ENCODE measurements at regions of chr4 and their contacts with region 1.

Region 1: GRCh38 chr4:105146276-105147015 is at the start of gene TET2:
- DNase-seq: peak; percentile 79 to 83
- ATAC-seq: peak; percentile 88 to 94 (median 90)
- H3K4me3 ChIP-seq: peak within 1 kb of the TSS; percentile 63 to 95 (median 85)
- H3K27ac ChIP-seq: peak within 1 kb of the TSS; percentile 69 to 97 (median 87)
- H3K4me1 ChIP-seq: peaks cover 0 to 47% (median 33%) of the 10 kb centered on the region in 9 donors
- H3K27me3 ChIP-seq: no peaks in the 10 kb centered on the region
- CTCF ChIP-seq: peak in 1 of 9 donors; percentile 2
- total RNA-seq, gene TET2: 12.1 to 20.6 (median 17.0) TPM

Region 2: DNA sequence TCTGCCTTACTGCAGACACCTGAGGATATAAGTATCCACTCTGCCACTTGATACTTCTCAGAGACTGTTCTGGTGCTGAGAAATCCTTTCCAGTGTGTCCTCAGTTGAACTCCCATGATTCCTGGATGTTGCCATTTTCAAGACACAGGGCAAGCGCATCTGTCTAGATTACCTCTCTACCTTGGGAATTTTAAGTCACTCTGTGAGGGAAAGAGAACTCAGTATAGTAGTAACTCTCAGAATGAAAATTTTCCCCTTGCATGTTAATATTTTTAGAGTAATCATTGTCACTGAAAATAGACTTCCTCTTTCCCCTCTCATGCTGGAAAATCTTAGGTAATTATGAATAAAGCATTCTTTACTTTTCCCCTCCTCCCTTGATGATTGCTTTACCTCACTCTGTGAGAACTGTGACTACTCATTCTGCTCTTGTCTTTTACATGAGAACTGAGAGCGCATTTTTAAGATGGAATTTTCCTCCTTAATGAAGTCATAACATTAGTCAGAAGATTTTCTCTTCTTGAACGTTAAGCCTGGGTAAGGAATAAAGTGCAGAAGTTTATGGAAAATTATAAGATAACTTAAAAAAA is 45.3 kb after region 1 on chr4:
- intact Hi-C with region 1: loop called in 6 of 10 experiments (anchors 5 kb)
- DNase-seq: no peak
- ATAC-seq: peak in 7 of 8 donors; percentile 34 to 75 (median 55)
- H3K4me3 ChIP-seq: peak overlapping the region in 1 of 10 donors; percentile 5
- H3K27ac ChIP-seq: peak overlapping the region in 8 of 10 donors; percentile 16 to 65 (median 44)
- H3K4me1 ChIP-seq: peaks cover 0 to 67% (median 57%) of the 10 kb centered on the region in 9 donors
- H3K27me3 ChIP-seq: no peaks in the 10 kb centered on the region
- CTCF ChIP-seq: no peak

Region 3: DNA sequence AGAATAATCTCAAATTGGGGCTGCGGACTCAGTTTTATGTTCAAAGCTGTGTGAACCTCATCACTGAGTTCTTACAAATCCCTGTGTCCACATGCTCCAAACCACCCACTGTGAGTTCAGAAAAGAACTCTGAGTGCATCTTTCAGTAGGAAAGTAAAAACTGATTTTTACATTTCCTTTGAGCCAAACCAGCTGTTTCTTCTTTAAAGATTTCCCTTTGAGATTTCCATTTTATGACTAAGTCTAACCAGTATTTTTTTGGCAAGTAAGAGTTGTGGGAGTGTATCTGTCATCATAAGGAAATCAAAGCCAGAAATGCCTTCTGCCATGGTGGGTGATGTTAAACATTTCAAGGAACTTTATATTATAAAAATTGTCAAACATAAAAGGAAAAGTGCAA is 100.3 kb after region 1 on chr4:
- intact Hi-C with region 1: loop called in 6 of 10 experiments (anchors 5 to 10 kb)
- DNase-seq: no peak
- ATAC-seq: peak in 7 of 8 donors; percentile 33 to 72 (median 46)
- H3K4me3 ChIP-seq: no peak overlapping the region
- H3K27ac ChIP-seq: no peak overlapping the region
- H3K4me1 ChIP-seq: peaks cover 0 to 16% (median 10%) of the 10 kb centered on the region in 9 donors
- H3K27me3 ChIP-seq: no peaks in the 10 kb centered on the region
- CTCF ChIP-seq: no peak

Region 4: DNA sequence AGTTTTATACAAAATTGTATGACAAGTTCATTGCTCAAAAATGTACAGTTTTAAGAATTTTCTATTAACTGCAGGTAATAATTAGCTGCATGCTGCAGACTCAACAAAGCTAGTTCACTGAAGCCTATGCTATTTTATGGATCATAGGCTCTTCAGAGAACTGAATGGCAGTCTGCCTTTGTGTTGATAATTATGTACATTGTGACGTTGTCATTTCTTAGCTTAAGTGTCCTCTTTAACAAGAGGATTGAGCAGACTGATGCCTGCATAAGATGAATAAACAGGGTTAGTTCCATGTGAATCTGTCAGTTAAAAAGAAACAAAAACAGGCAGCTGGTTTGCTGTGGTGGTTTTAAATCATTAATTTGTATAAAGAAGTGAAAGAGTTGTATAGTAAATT is 131.3 kb after region 1 on chr4:
- intact Hi-C with region 1: loop called in 1 of 10 experiments (anchors 10 kb)
- DNase-seq: no peak
- ATAC-seq: no peak
- H3K4me3 ChIP-seq: no peak overlapping the region
- H3K27ac ChIP-seq: no peak overlapping the region
- H3K4me1 ChIP-seq: peaks cover 0 to 10% (median 0%) of the 10 kb centered on the region in 9 donors
- H3K27me3 ChIP-seq: no peaks in the 10 kb centered on the region
- CTCF ChIP-seq: no peak

Region 5: DNA sequence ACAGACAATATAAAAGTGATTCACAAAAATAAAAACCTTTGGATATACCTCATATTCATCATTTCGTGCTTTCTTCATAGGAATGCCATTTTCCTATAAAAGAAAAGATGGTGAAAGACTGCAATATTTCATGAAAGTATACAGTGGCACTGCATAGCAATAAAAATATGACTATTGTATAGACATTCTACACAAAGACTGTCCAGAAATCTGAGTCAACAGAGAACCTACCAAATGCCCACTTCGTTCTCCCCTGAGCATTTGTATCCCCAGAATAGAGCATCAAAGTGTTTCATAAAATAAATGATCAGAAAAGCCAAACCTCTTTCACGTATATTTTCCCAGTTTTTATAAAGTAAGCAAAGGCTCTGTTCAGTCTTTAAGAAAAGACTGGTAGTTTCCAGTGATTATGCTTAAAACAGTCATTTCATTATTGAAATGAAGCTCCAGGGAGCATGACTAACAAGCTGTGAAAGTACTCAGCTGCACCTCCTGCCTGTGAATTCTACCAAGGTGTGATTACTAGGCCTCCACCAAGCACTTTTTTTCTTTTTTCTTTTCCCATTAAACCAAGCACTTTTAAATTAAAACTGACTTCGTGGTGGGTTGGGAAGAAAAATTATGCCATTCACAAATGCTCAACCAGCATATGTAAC is 307.2 kb after region 1 on chr4:
- intact Hi-C with region 1: loop called in 1 of 10 experiments (anchors 5 kb)
- DNase-seq: no peak
- ATAC-seq: no peak
- H3K4me3 ChIP-seq: no peak overlapping the region
- H3K27ac ChIP-seq: no peak overlapping the region
- H3K4me1 ChIP-seq: peaks cover 0 to 34% (median 14%) of the 10 kb centered on the region in 9 donors
- H3K27me3 ChIP-seq: no peaks in the 10 kb centered on the region
- CTCF ChIP-seq: no peak

Region 6: DNA sequence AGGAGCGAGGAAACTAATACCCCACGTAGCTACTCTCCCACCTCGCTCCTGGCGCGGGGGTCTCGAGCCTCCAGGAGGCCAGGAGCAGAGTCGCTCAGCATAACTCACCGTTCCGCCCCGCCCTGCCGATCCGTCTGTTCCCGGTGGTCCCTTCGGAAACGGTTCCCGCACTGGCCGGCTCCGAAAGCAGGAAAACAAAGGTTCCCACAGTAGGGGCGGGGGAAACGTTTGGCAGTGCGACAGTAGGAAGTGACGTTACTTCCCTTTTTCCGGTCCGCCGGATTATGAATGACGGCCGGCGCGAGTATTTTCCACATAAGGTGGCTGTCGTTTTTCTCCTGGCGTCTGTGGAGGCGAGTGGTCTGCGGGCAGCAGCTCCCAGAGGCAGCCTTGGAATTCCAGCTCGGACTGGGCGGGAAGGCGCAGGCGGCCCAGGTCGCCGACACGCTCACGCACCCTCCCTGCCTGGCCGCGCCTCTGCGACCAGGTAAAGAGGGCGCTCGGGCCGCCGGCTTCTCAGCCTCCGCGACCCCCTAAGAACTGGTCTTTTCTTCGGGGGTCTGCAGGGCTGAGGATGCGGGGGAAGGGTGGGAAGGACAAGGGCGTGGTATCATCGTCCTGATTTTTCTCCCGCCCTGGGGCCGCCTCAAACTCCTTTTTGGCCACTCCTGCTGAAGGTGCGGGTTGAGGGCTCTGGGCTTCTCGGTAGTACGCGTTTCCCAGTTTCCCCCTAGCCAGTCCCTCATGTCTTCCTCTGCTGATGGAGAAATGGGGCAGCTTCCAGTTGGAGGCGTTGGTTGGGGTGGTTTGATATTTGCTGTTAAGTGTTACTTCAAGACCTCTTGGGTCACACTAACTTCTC is 562.3 kb after region 1 on chr4 and contains the starts of genes GSTCD and INTS12:
- intact Hi-C with region 1: loop called in 3 of 10 experiments (anchors 10 kb)
- DNase-seq: peak; percentile 88 to 93
- ATAC-seq: peak; percentile 97 to 100 (median 99)
- H3K4me3 ChIP-seq: peak within 1 kb of the TSS; percentile 68 to 98 (median 86)
- H3K27ac ChIP-seq: peak within 1 kb of the TSS; percentile 20 to 92 (median 85)
- H3K4me1 ChIP-seq: peaks cover 0 to 38% (median 26%) of the 10 kb centered on the region in 9 donors
- H3K27me3 ChIP-seq: no peaks in the 10 kb centered on the region
- CTCF ChIP-seq: no peak
- total RNA-seq, gene GSTCD: 2.4 to 5.9 (median 4.4) TPM
- total RNA-seq, gene INTS12: 18.8 to 25.1 (median 22.3) TPM

Measured in heart right ventricle (tissue), 16 donors.